ENCODE measurements at regions of chr2 and their contacts with region 1.

Region 1: DNA sequence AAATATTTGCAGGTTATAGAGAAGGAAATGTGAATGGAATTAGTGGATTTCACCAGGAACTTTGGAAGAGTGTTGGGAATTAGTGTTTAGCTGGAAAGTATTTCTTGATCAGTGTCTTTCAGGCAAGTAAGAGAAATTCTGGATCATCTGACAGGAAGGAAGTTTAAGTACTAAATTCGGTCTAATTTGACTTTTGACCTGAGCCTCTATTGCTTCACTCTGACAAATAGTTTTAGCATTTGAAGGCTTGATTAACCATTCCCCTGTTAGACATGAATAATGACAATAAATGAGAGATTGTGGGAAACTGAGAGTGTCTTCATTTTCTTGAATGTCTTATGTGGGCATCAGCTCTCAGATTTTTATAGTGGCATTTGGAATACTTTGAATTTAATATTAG is 16.0 kb downstream of the CCNT2 start:
- DNase-seq: no peak
- H3K4me3 Mint-ChIP-seq: no peak overlapping the region
- H3K27ac Mint-ChIP-seq: no peak overlapping the region
- H3K4me1 Mint-ChIP-seq: peaks cover 51% of the 10 kb centered on the region
- H3K27me3 Mint-ChIP-seq: no peaks in the 10 kb centered on the region

Region 2: GRCh38 chr2:134949981-134950708 is 15.5 kb after region 1 on chr2:
- intact Hi-C with region 1: loop called (anchors 2 kb)
- DNase-seq: no peak
- H3K4me3 Mint-ChIP-seq: no peak overlapping the region
- H3K27ac Mint-ChIP-seq: peak overlapping the region; percentile 77
- H3K4me1 Mint-ChIP-seq: peaks cover 37% of the 10 kb centered on the region
- H3K27me3 Mint-ChIP-seq: no peaks in the 10 kb centered on the region